HepG2 (cell line): ENCODE measurements at regions of chr14 and their contacts with region 1.

Region 1: DNA sequence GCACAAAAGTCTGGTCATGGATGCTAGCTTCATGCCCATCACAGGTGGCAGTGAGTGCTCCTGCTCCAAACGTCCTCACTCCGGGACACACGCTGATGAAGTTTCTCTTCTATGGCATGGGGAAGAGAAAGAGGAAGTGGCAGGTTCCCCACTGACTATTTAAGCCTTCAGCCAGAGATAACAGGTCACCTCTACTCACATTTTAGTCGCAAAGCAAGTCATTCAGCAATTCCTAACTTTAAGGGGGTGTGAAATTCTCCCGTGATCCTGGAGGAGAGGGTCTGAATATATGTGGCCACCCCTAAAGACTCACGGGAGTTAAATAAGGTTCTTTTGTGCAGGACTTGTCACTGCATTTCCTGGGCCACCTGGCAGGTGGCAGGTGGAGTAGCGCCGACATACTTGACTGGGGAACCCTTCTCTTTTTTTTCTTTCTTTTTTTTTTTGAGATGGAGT is 18.8 kb upstream of the RCOR1 start:
- DNase-seq: no peak
- ATAC-seq: no peak
- H3K4me3 ChIP-seq: no peak overlapping the region
- H3K27ac ChIP-seq: peak overlapping the region; percentile 40
- H3K4me1 ChIP-seq: peaks cover 83% of the 10 kb centered on the region
- H3K27me3 ChIP-seq: no peaks in the 10 kb centered on the region
- CTCF ChIP-seq: no peak
- EP300 ChIP-seq: no peak
- POLR2A ChIP-seq: no peak
- RAD21 ChIP-seq: no peak

Region 2: GRCh38 chr14:102524466-102525218 is 49.0 kb before region 1 on chr14:
- CTCF ChIA-PET with region 1: no interaction called
- POLR2A ChIA-PET with region 1: interaction called, 14 read pairs
- in situ Hi-C with region 1: no loop called
- intact Hi-C with region 1: no loop called
- DNase-seq: peak; percentile 96
- ATAC-seq: peak; percentile 99
- H3K4me3 ChIP-seq: peak overlapping the region; percentile 72 to 81 (median 75)
- H3K27ac ChIP-seq: peak overlapping the region; percentile 57
- H3K4me1 ChIP-seq: peaks cover 38% of the 10 kb centered on the region
- H3K27me3 ChIP-seq: no peaks in the 10 kb centered on the region; a peak in 1 of 5 replicates
- CTCF ChIP-seq: peak; percentile 99
- EP300 ChIP-seq: no peak
- POLR2A ChIP-seq: peak; percentile 79 to 97
- RAD21 ChIP-seq: peak; percentile 98

Region 3: GRCh38 chr14:102545461-102546265 is 28.0 kb before region 1 on chr14:
- CTCF ChIA-PET with region 1: no interaction called
- POLR2A ChIA-PET with region 1: interaction called, 66 read pairs
- in situ Hi-C with region 1: no loop called
- intact Hi-C with region 1: no loop called
- DNase-seq: peak; percentile 63
- ATAC-seq: peak; percentile 52
- H3K4me3 ChIP-seq: peak overlapping the region; percentile 67 to 92 (median 82)
- H3K27ac ChIP-seq: peak overlapping the region; percentile 93
- H3K4me1 ChIP-seq: peaks cover 59% of the 10 kb centered on the region
- H3K27me3 ChIP-seq: no peaks in the 10 kb centered on the region; a peak in 1 of 5 replicates
- CTCF ChIP-seq: peak; percentile 49
- EP300 ChIP-seq: no peak; a peak in 1 of 4 replicates
- POLR2A ChIP-seq: peak in 1 of 2 experiments; percentile 58; a peak in 1 of 4 replicates
- RAD21 ChIP-seq: 0 out of 2 replicates have a peak, but pooled peaks have one; percentile 7

Region 4: DNA sequence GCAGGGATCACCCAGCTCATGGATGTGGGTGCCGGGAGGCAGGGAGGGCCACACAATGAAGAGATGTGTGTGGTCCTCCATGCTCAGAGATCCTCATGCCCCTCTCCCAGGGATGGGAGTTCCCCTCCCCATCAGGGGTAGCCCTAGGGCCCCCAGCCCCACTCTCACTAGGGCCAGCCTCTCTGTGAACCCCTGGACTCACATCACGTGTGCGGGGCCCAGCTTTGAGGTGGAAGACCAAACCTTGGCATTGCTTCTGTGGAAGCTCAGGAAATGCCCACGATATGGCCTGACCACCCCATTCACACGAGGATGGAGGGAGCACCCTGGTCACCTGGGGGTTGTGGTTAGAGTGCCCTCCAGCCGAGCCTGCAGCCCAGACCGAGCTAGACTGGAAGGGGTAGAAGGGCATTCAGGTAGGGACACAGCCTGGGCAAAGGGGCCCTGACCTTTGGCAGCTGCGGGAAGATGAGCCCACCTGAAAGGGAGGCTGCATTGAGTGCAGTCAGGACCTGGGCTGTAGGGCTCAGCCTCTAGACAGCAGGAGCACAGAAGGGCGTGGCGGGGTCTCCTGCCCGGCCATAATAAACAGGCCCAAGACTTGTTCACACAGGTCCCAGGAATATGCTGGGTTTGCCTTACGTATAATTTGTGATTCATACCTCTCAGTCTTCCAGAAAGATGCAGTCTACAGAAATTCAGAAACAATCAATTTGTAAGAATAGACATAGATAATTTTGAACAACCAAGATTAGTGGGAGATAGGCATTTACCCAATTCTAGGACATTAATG is 16.0 kb before region 1 on chr14:
- CTCF ChIA-PET with region 1: no interaction called
- POLR2A ChIA-PET with region 1: interaction called, 11 read pairs
- in situ Hi-C with region 1: no loop called
- intact Hi-C with region 1: no loop called
- DNase-seq: no peak
- ATAC-seq: peak; percentile 6; the same call in 1 of the 3 replicates
- H3K4me3 ChIP-seq: no peak overlapping the region
- H3K27ac ChIP-seq: no peak overlapping the region
- H3K4me1 ChIP-seq: peaks cover 21% of the 10 kb centered on the region
- H3K27me3 ChIP-seq: no peaks in the 10 kb centered on the region; a peak in 1 of 5 replicates
- CTCF ChIP-seq: no peak
- EP300 ChIP-seq: no peak
- POLR2A ChIP-seq: no peak
- RAD21 ChIP-seq: no peak

Region 5: DNA sequence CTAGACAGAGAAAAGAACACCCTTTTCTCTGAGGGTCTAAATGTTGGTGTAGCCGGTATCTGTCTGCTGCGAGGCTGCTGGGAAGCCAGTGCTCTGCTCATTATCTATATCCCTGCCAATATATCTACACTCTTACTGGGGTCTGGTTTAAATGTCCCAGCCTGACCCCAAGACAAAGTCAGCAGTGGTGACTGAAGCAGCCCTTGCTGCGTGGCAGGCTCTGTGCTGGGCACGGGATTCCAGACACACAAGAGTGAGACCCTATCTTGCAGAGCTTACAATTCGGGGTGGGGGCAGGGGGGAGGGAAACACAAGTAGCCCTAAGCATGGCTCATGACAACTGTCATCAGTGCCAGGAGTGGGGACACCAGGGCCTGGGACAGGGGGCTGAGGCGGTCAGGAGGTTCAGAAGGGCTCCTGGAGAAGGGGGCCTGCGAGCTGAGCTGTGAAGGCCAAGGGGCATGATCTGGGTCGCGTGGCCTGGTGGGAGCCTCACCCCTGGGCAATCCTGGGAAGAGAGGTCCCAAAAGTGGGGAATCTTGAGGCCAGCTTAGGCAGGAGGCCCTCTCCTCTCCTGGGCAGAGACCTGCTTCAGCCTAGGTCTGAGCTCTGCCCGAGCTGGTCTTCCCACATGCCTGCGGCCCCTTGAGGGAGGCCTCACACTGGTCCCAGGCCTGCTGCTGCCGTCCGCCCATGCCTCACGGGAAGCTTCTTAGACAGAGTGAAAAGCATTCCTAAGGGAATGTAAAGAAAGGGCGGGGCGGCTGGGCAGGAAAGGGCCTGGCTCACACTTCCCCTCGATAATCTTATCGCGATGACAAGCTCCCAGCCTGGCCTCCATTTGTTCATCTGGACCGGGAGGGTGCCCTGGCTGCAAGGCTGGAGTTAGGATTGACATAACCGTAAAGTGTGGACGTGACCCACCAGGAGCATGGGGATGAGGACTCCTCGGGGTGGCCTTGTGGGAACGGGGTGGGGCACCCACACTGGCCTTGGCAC is 11.6 kb after region 1 on chr14:
- CTCF ChIA-PET with region 1: no interaction called
- POLR2A ChIA-PET with region 1: interaction called, 51 read pairs
- in situ Hi-C with region 1: no loop called
- intact Hi-C with region 1: no loop called
- DNase-seq: no peak
- ATAC-seq: peak; percentile 81
- H3K4me3 ChIP-seq: peak overlapping the region in 2 of 3 experiments; percentile 13 to 58; a peak in 4 of 6 replicates
- H3K27ac ChIP-seq: no peak overlapping the region
- H3K4me1 ChIP-seq: peaks cover 76% of the 10 kb centered on the region
- H3K27me3 ChIP-seq: no peaks in the 10 kb centered on the region
- CTCF ChIP-seq: no peak
- EP300 ChIP-seq: no peak
- POLR2A ChIP-seq: no peak
- RAD21 ChIP-seq: no peak

Region 6: DNA sequence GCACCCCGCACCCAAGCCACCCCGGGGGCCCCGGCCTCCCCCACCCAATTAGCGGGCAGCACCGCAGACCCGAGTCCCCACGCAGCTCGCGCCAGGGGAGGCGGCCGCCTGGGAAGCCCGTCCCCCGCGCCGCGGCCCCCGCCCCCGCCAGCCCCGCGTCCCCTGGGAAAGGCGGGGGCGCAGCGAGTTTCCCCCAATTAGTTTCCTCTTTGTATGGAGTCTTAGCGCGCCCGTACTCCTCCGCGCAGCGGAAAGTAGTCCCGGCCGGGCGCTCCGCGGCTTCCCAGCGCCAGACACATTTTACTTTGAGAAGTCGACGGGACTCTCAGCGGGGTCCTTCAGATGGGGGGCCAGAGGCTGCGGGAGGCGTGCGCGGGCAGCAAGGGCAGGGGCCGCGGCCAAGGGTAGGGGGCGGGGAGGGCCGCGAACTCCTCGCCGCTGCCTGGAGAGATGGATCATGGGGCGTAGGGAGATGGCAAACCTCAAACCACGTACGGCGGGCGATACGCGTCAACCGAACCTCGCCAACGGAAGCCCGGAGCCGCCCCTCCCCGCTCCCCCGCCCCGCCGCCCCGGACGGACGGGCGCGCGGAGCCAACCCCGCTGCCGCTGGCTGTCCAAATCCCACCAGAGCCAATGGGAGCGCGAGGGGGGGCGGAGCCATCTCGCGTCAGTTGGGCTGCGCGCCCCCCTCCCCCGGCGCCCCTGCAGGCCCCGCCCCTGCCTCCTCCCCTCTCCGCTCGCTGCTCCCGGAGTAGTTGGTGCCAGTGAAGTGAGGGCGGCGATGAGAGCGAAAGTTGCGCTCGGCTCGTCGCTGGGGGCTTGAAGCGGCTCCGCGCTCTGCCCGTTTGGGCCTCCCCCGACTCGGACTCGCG is 18.5 kb after region 1 on chr14 and contains the start of gene RCOR1:
- CTCF ChIA-PET with region 1: no interaction called
- POLR2A ChIA-PET with region 1: interaction called, 51 read pairs
- in situ Hi-C with region 1: no loop called
- intact Hi-C with region 1: no loop called
- DNase-seq: peak; percentile 89
- ATAC-seq: peak; percentile 77
- H3K4me3 ChIP-seq: peak within 1 kb of the TSS; percentile 94 to 97 (median 94)
- H3K27ac ChIP-seq: peak within 1 kb of the TSS; percentile 99
- H3K4me1 ChIP-seq: peaks cover 48% of the 10 kb centered on the region
- H3K27me3 ChIP-seq: no peaks in the 10 kb centered on the region; a peak in 1 of 5 replicates
- CTCF ChIP-seq: no peak
- EP300 ChIP-seq: no peak
- POLR2A ChIP-seq: peak; percentile 85 to 94
- RAD21 ChIP-seq: peak; percentile 58; the same call in 1 of the 2 replicates
- total RNA-seq, gene RCOR1: 11.1 and 14.8 TPM in 2 replicates

Region 7: DNA sequence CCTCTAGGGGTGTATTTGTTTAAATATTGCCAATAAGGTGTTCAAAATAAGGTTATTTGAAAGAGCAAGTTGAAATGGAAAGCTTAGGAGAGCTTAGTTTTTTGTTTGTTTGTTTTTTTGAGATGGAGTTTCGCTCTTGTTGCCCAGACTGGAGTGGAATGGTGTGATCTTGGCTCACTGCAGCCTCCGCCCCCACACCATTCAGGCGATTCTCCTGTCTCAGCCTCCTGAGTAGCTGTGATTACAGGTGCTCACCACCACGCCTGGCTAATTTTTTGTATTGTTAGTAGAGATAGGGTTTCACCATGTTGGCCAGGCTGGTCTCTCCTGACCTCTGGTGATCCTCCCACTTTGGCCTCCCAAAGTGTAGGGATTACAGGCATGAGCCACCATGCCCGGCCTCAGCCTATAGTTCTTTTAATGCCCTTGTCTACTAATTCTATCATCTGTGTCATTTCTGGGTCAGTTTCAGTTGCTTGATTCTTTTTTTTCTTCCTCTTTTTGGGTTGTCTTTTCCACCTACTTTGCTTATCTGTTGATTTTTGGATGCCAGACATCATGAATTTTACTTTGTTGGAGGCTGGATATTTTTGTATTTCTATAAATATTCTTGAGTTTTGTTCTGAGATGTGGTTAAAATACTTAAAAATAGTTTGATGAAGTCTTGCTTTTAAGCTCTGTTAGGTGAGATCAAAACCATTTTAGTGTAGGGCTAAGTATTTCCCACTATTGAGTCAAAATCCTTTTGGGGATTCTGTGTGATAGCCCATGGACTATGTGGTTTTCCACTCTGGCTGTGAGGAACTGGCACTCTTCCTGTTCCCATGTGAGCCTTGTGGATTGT is 37.6 kb after region 1 on chr14:
- CTCF ChIA-PET with region 1: no interaction called
- POLR2A ChIA-PET with region 1: no interaction called
- in situ Hi-C with region 1: no loop called
- intact Hi-C with region 1: no loop called
- DNase-seq: no peak
- ATAC-seq: no peak
- H3K4me3 ChIP-seq: no peak overlapping the region
- H3K27ac ChIP-seq: no peak overlapping the region
- H3K4me1 ChIP-seq: peaks cover under 1% of the 10 kb centered on the region; the same call in 1 of the 2 replicates
- H3K27me3 ChIP-seq: no peaks in the 10 kb centered on the region
- CTCF ChIP-seq: no peak
- EP300 ChIP-seq: no peak
- POLR2A ChIP-seq: no peak
- RAD21 ChIP-seq: no peak

Region 8: GRCh38 chr14:102819176-102819628 is 245.6 kb after region 1 on chr14:
- CTCF ChIA-PET with region 1: no interaction called
- POLR2A ChIA-PET with region 1: no interaction called
- in situ Hi-C with region 1: no loop called
- intact Hi-C with region 1: no loop called
- DNase-seq: peak; percentile 77
- ATAC-seq: peak; percentile 92
- H3K4me3 ChIP-seq: peak overlapping the region; percentile 40 to 67 (median 52)
- H3K27ac ChIP-seq: peak overlapping the region; percentile 59
- H3K4me1 ChIP-seq: peaks cover 57% of the 10 kb centered on the region
- H3K27me3 ChIP-seq: no peaks in the 10 kb centered on the region
- CTCF ChIP-seq: no peak
- EP300 ChIP-seq: no peak
- POLR2A ChIP-seq: no peak
- RAD21 ChIP-seq: no peak